ENCODE measurements at regions of chr16 and their contacts with region 1.

Region 1: DNA sequence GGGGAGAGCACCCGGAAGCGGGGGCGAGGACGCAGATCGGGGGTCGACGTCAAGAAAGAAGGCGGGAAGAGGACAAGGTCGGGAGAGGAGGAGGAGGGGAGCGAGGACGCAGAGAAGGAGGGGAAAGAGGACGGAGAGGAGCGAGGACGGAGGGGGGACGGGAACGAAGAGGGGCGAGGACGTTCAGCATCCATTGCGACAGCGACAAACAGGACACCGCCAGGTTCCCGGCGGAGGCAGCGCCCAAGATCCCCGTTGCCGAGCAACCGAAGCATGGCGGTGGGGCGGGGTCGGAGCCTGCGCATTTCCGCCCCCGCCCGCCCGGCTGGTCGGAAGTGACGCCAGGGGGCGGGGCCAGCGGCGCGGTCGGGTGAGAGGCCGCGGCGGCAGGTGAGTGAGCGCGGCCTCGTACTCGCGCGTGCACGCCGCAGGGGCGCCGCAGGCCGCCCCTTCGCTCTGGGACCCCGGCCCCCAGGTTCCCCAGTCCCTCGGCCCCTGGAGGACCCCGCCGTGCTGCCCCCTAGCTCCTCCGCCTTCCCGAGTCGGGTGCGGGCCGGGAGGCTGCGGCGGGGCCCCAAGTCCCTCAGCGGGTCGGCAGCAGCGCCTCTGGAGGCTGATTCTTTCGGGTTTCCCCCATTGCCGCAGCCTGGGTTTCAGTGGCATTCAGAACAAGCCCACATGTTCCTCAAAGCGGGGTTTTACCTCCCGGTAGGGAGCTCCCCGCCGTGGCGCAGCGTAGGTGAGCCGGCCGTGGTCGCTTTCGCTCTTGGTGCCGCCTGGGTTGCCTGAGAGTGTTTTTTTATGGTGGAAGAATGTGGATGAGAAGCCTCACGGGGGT is at the start of gene FAM234A:
- DNase-seq: peak; percentile 90 to 97 (median 95)
- ATAC-seq: peak; percentile 82
- H3K4me3 ChIP-seq: peak within 1 kb of the TSS; percentile 79 to 94
- H3K4me3 Mint-ChIP-seq: peak within 1 kb of the TSS; percentile 96
- H3K27ac ChIP-seq: peak within 1 kb of the TSS; percentile 99
- H3K27ac Mint-ChIP-seq: peak within 1 kb of the TSS; percentile 99
- H3K4me1 ChIP-seq: peaks cover 17% of the 10 kb centered on the region
- H3K4me1 Mint-ChIP-seq: peaks cover 15% of the 10 kb centered on the region
- H3K27me3 ChIP-seq: no peaks in the 10 kb centered on the region
- H3K27me3 Mint-ChIP-seq: no peaks in the 10 kb centered on the region
- CTCF ChIP-seq: peak; percentile 52
- total RNA-seq, gene FAM234A: 22.4 to 24.7 TPM

Region 2: GRCh38 chr16:53346-54236 is 181.1 kb before region 1 on chr16 and contains the starts of genes POLR3K and SNRNP25:
- CTCF ChIA-PET with region 1: no interaction called
- POLR2A ChIA-PET with region 1: no interaction called
- intact Hi-C with region 1: loop called in 1 of 2 experiments (anchors 1 kb)
- DNase-seq: peak; percentile 96 to 99 (median 98)
- ATAC-seq: peak; percentile 97
- H3K4me3 ChIP-seq: peak within 1 kb of the TSS; percentile 91 to 98
- H3K4me3 Mint-ChIP-seq: peak within 1 kb of the TSS; percentile 97
- H3K27ac ChIP-seq: peak within 1 kb of the TSS; percentile 60
- H3K27ac Mint-ChIP-seq: peak within 1 kb of the TSS; percentile 85
- H3K4me1 ChIP-seq: peaks cover 21% of the 10 kb centered on the region
- H3K4me1 Mint-ChIP-seq: peaks cover 28% of the 10 kb centered on the region
- H3K27me3 ChIP-seq: no peaks in the 10 kb centered on the region
- H3K27me3 Mint-ChIP-seq: no peaks in the 10 kb centered on the region
- CTCF ChIP-seq: no peak
- total RNA-seq, gene POLR3K: 4.6 to 5.5 TPM
- total RNA-seq, gene SNRNP25: 4.9 to 5.4 TPM

Region 3: DNA sequence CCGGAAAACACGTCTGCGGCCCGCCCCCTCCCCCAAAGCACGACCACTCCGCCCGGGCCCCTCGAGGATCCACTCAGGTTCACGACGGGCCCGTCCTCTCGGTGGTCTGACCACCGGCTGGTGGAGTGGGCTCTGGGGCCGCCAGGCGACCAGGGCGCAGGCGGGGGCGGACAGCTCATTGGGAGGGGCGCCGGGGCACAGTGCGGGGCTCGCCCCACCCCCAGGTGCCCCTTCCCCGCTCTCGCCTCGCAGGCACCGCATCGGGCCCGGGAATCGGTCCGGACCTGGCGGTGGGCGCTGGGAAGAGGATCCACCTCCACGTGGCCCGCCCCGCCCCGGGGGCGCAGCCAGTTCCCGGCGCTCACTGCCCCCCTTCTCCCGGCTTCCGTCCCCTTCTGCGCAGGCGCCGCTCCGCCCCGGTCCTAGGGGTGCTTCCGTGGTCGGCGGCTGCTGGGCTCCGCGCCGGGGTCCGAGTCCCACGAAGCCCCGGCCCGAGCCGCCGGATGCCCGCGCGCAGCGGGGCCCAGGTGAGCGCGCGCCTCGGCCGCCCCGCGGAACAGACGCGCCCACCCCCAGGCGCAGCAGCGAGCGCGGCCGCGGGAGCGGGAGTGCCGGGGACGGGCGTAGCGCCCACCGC is 156.8 kb before region 1 on chr16 and contains the start of gene MPG:
- CTCF ChIA-PET with region 1: no interaction called
- POLR2A ChIA-PET with region 1: no interaction called
- intact Hi-C with region 1: no loop called
- DNase-seq: peak; percentile 55 to 90 (median 80)
- ATAC-seq: peak; percentile 91
- H3K4me3 ChIP-seq: peak within 1 kb of the TSS; percentile 68 to 69
- H3K4me3 Mint-ChIP-seq: peak within 1 kb of the TSS; percentile 87
- H3K27ac ChIP-seq: peak within 1 kb of the TSS; percentile 31 to 55
- H3K27ac Mint-ChIP-seq: peak within 1 kb of the TSS; percentile 73
- H3K4me1 ChIP-seq: peaks cover 26% of the 10 kb centered on the region
- H3K4me1 Mint-ChIP-seq: peaks cover 31% of the 10 kb centered on the region
- H3K27me3 ChIP-seq: peaks cover 5 to 7% of the 10 kb centered on the region in 2 experiments
- H3K27me3 Mint-ChIP-seq: peaks cover 11% of the 10 kb centered on the region
- CTCF ChIP-seq: no peak
- total RNA-seq, gene MPG: 12.3 to 13.0 TPM

Region 4: GRCh38 chr16:138049-138417 is 96.7 kb before region 1 on chr16:
- CTCF ChIA-PET with region 1: no interaction called
- POLR2A ChIA-PET with region 1: no interaction called
- intact Hi-C with region 1: loop called (anchors 2 to 5 kb)
- DNase-seq: peak in 6 of 9 experiments; percentile 8 to 61 (median 36)
- ATAC-seq: peak; percentile 25
- H3K4me3 ChIP-seq: peak overlapping the region; percentile 58 to 75
- H3K4me3 Mint-ChIP-seq: peak overlapping the region; percentile 85
- H3K27ac ChIP-seq: peak overlapping the region; percentile 33 to 40
- H3K27ac Mint-ChIP-seq: peak overlapping the region; percentile 66
- H3K4me1 ChIP-seq: peaks cover 7% of the 10 kb centered on the region
- H3K4me1 Mint-ChIP-seq: peaks cover 34% of the 10 kb centered on the region
- H3K27me3 ChIP-seq: no peaks in the 10 kb centered on the region
- H3K27me3 Mint-ChIP-seq: no peaks in the 10 kb centered on the region
- CTCF ChIP-seq: no peak

Region 5: DNA sequence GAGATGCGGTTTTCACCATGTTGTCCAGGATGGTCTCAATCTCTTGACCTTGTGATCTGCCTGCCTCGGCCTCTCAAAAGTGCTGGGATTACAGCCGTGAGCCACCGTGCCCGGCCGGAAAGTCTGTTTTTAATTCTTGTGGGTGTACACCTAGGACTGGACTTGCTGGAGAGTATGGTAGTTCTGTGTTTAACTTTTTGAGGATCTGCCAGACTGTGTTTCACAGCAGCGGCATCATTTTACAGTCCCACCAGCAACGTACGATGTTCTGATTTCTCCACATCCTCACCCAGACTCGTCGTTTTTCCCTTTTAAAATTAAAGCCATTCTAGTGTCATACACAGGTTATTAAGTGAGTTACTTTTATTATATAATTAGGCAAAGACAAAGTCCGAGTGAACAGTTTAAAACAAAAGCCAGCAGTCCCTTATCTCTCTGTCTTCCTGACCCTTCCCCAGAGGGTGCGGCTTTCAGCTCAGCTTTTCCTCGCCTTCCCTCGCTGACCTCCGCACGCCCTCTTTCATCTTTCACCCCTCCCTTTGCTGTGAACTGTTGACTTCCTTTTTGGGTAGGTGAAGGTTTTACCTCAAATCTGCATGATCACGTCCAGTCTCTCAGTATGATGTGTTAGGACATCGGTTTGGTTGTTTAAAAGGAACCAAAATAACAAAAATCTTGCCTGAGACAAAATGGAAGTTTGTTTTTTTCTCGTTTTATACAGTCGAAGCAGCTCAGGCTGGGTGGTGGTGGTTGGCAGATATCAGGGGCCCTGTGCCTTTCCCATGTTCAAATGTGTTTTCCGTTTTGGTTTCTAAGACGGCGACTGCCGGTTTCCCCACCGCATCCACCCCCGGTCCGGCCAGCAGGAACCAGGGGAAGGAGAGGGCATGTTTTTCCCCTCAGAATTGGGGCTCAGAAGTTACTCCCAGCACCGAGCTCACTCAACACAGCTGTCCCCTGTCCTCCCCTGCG is 18.0 kb after region 1 on chr16:
- CTCF ChIA-PET with region 1: interaction called, 3 read pairs
- POLR2A ChIA-PET with region 1: no interaction called
- intact Hi-C with region 1: loop called in 1 of 2 experiments (anchors 2 kb)
- DNase-seq: peak in 3 of 9 experiments; percentile 18 to 57 (median 37)
- ATAC-seq: peak; percentile 56
- H3K4me3 ChIP-seq: peak overlapping the region; percentile 24 to 33
- H3K4me3 Mint-ChIP-seq: peak overlapping the region; percentile 78
- H3K27ac ChIP-seq: peak overlapping the region; percentile 26 to 71
- H3K27ac Mint-ChIP-seq: peak overlapping the region; percentile 91
- H3K4me1 ChIP-seq: peaks cover 20% of the 10 kb centered on the region
- H3K4me1 Mint-ChIP-seq: peaks cover 20% of the 10 kb centered on the region
- H3K27me3 ChIP-seq: no peaks in the 10 kb centered on the region
- H3K27me3 Mint-ChIP-seq: no peaks in the 10 kb centered on the region
- CTCF ChIP-seq: no peak

Region 6: GRCh38 chr16:297832-298417 is 63.2 kb after region 1 on chr16:
- CTCF ChIA-PET with region 1: no interaction called
- POLR2A ChIA-PET with region 1: no interaction called
- intact Hi-C with region 1: no loop called
- DNase-seq: no peak
- ATAC-seq: no peak
- H3K4me3 ChIP-seq: no peak overlapping the region
- H3K4me3 Mint-ChIP-seq: no peak overlapping the region
- H3K27ac ChIP-seq: no peak overlapping the region
- H3K27ac Mint-ChIP-seq: no peak overlapping the region
- H3K4me1 ChIP-seq: no peaks in the 10 kb centered on the region
- H3K4me1 Mint-ChIP-seq: no peaks in the 10 kb centered on the region
- H3K27me3 ChIP-seq: no peaks in the 10 kb centered on the region
- H3K27me3 Mint-ChIP-seq: no peaks in the 10 kb centered on the region
- CTCF ChIP-seq: no peak

Region 7: DNA sequence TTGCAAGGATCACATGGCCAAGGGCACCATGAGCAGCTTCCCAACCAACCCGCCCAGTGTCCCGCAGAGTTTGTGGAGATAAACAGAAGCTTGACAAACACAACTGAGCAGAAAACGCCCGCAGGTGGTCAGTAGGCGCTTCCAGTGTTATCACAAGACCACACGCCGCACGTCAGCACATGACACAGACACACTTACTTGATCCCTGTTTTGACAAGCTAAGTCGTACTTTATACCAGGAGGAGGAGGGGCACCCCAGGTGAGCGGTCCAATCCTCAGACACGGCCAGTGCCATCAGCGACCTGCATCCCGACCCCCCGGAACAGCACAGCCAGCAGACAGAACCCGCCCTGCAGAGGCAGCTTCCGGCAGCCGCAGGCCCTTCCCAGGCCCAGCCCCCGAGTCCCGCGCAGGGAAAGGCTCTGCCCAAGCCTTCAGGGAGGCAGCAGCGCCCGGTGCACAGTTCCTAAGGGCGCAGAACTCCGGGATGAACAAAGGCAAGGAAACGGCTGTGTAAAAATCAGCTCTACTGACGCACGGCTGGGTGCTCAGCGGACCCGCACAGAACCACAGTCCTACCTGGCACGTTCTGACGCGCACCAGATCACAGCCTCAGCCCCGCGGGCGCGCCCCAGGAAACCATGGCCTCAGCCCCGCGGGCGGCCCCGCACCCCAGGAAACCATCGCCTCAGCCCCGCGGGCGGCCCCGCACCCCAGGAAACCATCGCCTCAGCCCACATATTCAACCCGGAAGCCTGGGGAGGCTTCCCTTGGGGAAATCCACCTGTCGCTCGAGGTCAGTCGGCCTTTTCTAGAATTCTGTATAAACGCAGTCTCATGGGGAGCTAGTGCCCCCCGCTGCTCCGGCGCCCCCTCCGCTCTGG is 90.0 kb after region 1 on chr16:
- CTCF ChIA-PET with region 1: interaction called, 3 read pairs
- POLR2A ChIA-PET with region 1: no interaction called
- intact Hi-C with region 1: loop called in 1 of 2 experiments (anchors 1 kb)
- DNase-seq: peak; percentile 46 to 93 (median 78)
- ATAC-seq: peak; percentile 72
- H3K4me3 ChIP-seq: peak overlapping the region; percentile 35 to 41
- H3K4me3 Mint-ChIP-seq: peak overlapping the region; percentile 75
- H3K27ac ChIP-seq: peak overlapping the region; percentile 68 to 71
- H3K27ac Mint-ChIP-seq: peak overlapping the region; percentile 92
- H3K4me1 ChIP-seq: peaks cover 64% of the 10 kb centered on the region
- H3K4me1 Mint-ChIP-seq: peaks cover 60% of the 10 kb centered on the region
- H3K27me3 ChIP-seq: no peaks in the 10 kb centered on the region
- H3K27me3 Mint-ChIP-seq: no peaks in the 10 kb centered on the region
- CTCF ChIP-seq: no peak

Region 8: GRCh38 chr16:361872-362701 is 127.4 kb after region 1 on chr16:
- CTCF ChIA-PET with region 1: interaction called, 10 read pairs
- POLR2A ChIA-PET with region 1: no interaction called
- intact Hi-C with region 1: no loop called
- DNase-seq: peak; percentile 51 to 86 (median 77)
- ATAC-seq: peak; percentile 96
- H3K4me3 ChIP-seq: peak overlapping the region in 1 of 2 experiments; percentile 37
- H3K4me3 Mint-ChIP-seq: peak overlapping the region; percentile 26
- H3K27ac ChIP-seq: no peak overlapping the region
- H3K27ac Mint-ChIP-seq: peak overlapping the region; percentile 45
- H3K4me1 ChIP-seq: peaks cover 9% of the 10 kb centered on the region
- H3K4me1 Mint-ChIP-seq: peaks cover 8% of the 10 kb centered on the region
- H3K27me3 ChIP-seq: no peaks in the 10 kb centered on the region
- H3K27me3 Mint-ChIP-seq: no peaks in the 10 kb centered on the region
- CTCF ChIP-seq: peak; percentile 80

Region 9: DNA sequence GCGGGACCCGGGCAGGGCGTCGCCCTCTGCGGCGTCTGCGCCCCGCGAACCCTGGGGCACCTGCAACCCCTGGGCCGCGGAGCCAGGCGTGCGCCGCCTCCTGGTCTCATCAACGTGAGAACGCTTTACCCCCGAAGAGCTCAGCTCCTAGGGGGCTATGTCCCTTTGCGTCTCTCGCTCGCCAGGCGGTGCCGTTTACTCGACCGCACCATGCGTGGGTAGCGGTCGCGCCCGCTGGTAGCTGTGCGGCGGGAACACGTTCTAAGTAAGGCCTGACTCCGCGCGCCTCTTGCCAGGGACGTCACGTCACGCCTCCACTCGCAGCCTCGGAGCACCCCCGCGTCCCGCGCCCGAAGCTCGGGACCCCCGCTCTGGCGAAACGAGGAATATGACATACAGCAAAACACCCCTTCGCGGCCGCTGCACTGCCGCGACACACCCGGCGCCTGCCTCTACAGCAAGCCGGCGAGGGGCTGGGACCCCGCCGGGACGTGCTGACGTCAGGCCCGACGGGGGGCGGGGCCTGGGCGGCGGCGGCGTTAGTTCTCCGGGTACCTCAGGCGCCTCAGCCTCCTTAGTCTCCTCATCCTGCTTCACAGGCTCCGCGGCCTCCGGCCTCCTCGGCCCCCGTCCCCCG is 190.5 kb after region 1 on chr16 and contains the start of gene RAB11FIP3:
- CTCF ChIA-PET with region 1: no interaction called
- POLR2A ChIA-PET with region 1: no interaction called
- intact Hi-C with region 1: loop called in 1 of 2 experiments (anchors 2 kb)
- DNase-seq: peak; percentile 66 to 92 (median 83)
- ATAC-seq: peak; percentile 89
- H3K4me3 ChIP-seq: peak within 1 kb of the TSS; percentile 78 to 86
- H3K4me3 Mint-ChIP-seq: peak within 1 kb of the TSS; percentile 90
- H3K27ac ChIP-seq: peak within 1 kb of the TSS; percentile 81 to 93
- H3K27ac Mint-ChIP-seq: peak within 1 kb of the TSS; percentile 96
- H3K4me1 ChIP-seq: peaks cover 21% of the 10 kb centered on the region
- H3K4me1 Mint-ChIP-seq: peaks cover 36% of the 10 kb centered on the region
- H3K27me3 ChIP-seq: peaks cover 0 to 3% of the 10 kb centered on the region in 2 experiments
- H3K27me3 Mint-ChIP-seq: peaks cover 3% of the 10 kb centered on the region
- CTCF ChIP-seq: peak; percentile 40
- total RNA-seq, gene RAB11FIP3: 26.4 to 27.5 TPM

Region 10: DNA sequence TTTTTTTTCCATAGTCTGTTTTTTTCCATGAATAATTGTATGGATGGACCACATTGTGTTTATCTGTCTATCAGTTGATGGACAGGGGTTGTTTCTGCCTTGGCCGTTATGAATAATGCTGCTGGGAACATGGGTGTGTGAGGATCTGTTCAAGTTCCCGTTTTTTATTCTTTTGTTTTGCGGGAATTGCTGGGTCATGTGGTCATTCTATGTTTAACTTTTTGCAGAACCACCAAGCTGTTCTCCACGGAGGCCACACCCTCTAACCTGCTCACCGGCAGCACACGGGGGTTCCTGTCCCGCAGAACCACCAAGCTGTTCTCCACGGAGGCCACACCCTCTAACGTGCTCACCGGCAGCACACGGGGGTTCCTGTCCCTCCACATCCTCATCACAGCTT is 520.0 kb after region 1 on chr16:
- CTCF ChIA-PET with region 1: no interaction called
- POLR2A ChIA-PET with region 1: no interaction called
- intact Hi-C with region 1: no loop called
- DNase-seq: peak in 3 of 9 experiments; percentile 4 to 29 (median 19)
- ATAC-seq: peak; percentile 86
- H3K4me3 ChIP-seq: no peak overlapping the region
- H3K4me3 Mint-ChIP-seq: no peak overlapping the region
- H3K27ac ChIP-seq: no peak overlapping the region
- H3K27ac Mint-ChIP-seq: no peak overlapping the region
- H3K4me1 ChIP-seq: no peaks in the 10 kb centered on the region
- H3K4me1 Mint-ChIP-seq: peaks cover 6% of the 10 kb centered on the region
- H3K27me3 ChIP-seq: no peaks in the 10 kb centered on the region
- H3K27me3 Mint-ChIP-seq: peaks cover 13% of the 10 kb centered on the region
- CTCF ChIP-seq: no peak